Cardiac septum (tissue), 1 donor: ENCODE measurements at regions of chr3 and their contacts with region 1.

Region 1: DNA sequence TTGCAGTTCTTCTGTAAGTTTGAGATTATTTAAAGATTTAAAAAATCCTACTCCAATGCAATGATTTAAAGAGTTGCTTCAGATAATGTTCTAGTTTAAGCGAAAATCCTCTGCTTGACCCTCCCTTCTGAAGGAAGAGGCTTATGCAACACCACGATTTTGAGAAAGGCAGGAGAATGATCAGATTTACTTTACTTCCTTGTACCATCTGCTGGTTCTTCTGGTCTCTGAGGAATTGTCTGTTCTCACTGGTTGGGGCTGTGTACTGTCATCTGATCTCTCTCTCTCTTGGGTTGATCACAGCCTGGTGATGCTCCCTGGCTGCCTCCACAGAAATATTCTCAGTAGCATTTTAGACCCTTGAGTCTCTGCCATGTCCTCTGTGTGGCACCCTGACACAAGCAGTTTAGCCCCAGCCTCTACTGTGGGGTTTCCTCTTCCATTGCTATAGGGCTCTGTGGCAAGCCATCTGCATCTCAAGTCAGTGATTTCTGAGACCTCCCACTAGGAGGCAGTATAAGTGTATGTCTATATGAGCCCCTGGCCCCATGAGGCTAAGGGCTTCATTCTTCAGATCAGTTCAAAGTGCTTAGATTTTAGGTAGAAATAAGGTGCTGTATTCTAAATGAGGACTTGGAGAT is 50.8 kb upstream of the PLAAT1 start:
- DNase-seq: no peak

Region 2: GRCh38 chr3:193452338-193452737 is 262.1 kb after region 1 on chr3:
- intact Hi-C with region 1: loop called (anchors 10 kb)
- DNase-seq: no peak

Region 3: GRCh38 chr3:193564012-193564411 is 373.7 kb after region 1 on chr3:
- intact Hi-C with region 1: loop called (anchors 10 kb)
- DNase-seq: no peak